OCI-LY7 (cell line): ENCODE measurements at regions of chr9 and their contacts with region 1.

Region 1: DNA sequence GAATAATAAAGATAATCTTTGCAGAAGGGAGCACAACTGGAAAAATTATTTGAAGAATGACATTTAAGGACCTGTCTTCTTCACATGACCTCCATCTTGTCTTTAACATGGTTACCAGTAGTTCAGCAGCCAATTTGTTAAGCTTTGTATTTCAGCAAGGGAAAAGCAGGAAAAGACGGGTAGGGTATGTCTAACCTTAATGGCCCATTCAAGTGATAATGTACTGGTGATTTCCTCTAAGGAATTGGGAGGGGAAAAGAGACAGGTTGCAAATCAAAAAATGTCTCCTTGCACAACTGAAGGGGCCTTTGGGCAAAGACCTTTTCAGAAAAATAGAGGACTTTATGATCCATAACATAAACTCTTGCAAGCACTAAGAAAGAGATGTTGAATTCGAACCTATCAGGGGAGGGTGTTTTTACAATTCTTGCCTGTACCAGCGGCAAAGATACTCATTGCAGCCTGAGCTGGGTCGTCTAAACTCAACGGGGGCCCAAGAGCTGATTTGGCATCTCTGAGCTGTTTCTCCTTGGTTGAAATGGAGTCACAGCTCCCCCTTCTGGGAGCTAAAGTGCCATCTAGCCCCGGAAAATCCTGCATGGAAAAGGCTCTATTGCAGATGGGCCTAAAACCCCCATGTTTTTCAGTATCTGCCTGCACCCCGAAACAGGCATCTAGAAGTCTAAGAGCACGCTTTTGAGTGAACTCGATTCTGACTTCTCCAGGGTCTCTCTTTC is 3.8 kb downstream of the BRINP1 start:
- DNase-seq: peak; percentile 37
- H3K4me3 ChIP-seq: no peak overlapping the region
- H3K27ac ChIP-seq: no peak overlapping the region
- H3K4me1 ChIP-seq: no peaks in the 10 kb centered on the region
- CTCF ChIP-seq: peak; percentile 76

Region 2: GRCh38 chr9:118522093-118523028 is 843.1 kb before region 1 on chr9:
- CTCF ChIA-PET with region 1: no interaction called
- POLR2A ChIA-PET with region 1: no interaction called
- intact Hi-C with region 1: loop called (anchors 10 kb)
- DNase-seq: peak; percentile 47
- H3K4me3 ChIP-seq: no peak overlapping the region
- H3K27ac ChIP-seq: no peak overlapping the region
- H3K4me1 ChIP-seq: no peaks in the 10 kb centered on the region
- CTCF ChIP-seq: peak; percentile 80